Right ventricle myocardium inferior (tissue), 1 donor: ENCODE measurements at regions of chr11 and their contacts with region 1.

Region 1: GRCh38 chr11:114400217-114400914 is at the starts of genes C11orf71 and RBM7:
- DNase-seq: peak; percentile 99
- ATAC-seq: peak; percentile 98
- total RNA-seq, gene C11orf71: 9.3 TPM
- total RNA-seq, gene RBM7: 19.6 TPM

Region 2: DNA sequence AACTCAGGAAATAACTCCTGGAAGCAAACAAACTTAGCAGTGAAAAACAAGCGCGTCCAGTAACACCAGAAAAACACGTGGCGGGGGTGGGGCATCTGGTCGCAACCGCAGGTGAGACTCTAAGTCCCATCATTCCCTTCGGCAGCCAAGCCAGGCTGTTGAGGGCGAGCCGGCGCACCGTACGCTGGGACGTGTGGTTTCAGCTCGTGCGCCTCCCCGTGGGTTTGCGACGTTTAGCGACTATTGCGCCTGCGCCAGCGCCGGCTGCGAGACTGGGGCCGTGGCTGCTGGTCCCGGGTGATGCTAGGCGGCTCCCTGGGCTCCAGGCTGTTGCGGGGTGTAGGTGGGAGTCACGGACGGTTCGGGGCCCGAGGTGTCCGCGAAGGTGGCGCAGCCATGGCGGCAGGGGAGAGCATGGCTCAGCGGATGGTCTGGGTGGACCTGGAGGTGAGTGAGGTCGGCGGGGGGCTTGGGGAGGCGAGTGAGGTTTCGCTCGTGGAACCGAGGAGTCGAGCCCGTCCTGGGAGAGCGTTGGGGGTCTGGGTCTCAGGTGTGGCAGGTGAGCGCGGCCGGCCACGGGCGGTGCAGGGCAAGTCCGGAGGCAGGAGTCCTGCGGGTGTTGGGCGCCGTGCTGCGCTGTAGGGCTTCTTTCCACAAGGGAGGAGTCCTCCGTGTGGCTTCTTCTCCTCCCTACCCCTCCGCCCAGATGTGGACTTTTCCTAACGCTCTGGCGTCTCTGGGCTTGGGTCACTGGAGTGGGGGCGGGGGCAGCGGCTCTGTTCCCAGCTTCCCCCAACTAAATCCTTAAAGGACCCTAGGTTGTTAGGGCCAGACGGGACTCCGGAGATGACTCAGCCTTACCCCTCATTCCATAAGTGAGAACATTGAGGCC is 39.1 kb after region 1 on chr11 and contains the start of gene REXO2:
- intact Hi-C with region 1: loop called (anchors 2 kb)
- DNase-seq: peak; percentile 96
- ATAC-seq: peak; percentile 99
- total RNA-seq, gene REXO2: 174 TPM

Region 3: GRCh38 chr11:114522818-114523217 is 122.5 kb after region 1 on chr11:
- intact Hi-C with region 1: no loop called
- DNase-seq: no peak
- ATAC-seq: no peak